ENCODE measurements at regions of chr19 and their contacts with region 1.

Region 1: DNA sequence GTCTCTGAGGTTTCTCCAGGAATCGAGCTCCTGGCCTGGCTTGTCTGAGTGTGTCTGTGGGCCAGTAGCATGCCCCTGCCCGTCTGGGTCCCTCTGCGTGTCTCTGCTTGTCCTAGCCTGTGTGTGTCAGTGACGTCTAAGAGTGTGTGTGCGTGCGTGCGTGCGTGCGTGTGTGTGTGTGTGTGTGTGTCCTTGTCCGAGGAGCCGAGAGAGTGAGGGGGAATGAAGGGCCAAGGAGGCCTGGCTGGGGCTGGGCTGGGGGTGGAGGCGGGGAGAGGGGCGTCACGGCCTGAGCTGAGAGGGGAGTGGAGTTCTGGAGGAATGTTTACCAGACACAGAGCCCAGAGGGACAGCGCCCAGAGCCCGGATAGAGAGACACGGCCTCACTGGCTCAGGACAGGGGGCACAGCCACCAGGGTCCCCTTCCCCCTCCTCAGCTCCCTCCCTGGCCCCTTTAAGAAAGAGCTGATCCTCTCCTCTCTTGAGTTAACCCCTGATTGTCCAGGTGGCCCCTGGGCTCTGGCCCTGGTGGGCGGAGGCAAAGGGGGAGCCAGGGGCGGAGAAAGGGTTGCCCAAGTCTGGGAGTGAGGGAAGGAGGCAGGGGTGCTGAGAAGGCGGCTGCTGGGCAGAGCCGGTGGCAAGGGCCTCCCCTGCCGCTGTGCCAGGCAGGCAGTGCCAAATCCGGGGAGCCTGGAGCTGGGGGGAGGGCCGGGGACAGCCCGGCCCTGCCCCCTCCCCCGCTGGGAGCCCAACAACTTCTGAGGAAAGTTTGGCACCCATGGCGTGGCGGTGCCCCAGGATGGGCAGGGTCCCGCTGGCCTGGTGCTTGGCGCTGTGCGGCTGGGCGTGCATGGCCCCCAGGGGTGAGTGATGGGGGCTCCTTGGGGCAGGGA is at the start of gene AXL:
- DNase-seq: peak; percentile 95
- H3K4me3 ChIP-seq: peak within 1 kb of the TSS; percentile 64 to 86 (median 74)
- H3K27ac ChIP-seq: peak within 1 kb of the TSS; percentile 91 to 98 (median 94)
- H3K4me1 ChIP-seq: peaks cover 0 to 44% (median 40%) of the 10 kb centered on the region in 4 donors
- H3K27me3 ChIP-seq: no peaks in the 10 kb centered on the region
- CTCF ChIP-seq: no peak
- EP300 ChIP-seq: peak in 1 of 4 donors; percentile 69
- POLR2A ChIP-seq: peak; percentile 67 to 70
- total RNA-seq, gene AXL: 85.9 to 108 (median 95.4) TPM

Region 2: DNA sequence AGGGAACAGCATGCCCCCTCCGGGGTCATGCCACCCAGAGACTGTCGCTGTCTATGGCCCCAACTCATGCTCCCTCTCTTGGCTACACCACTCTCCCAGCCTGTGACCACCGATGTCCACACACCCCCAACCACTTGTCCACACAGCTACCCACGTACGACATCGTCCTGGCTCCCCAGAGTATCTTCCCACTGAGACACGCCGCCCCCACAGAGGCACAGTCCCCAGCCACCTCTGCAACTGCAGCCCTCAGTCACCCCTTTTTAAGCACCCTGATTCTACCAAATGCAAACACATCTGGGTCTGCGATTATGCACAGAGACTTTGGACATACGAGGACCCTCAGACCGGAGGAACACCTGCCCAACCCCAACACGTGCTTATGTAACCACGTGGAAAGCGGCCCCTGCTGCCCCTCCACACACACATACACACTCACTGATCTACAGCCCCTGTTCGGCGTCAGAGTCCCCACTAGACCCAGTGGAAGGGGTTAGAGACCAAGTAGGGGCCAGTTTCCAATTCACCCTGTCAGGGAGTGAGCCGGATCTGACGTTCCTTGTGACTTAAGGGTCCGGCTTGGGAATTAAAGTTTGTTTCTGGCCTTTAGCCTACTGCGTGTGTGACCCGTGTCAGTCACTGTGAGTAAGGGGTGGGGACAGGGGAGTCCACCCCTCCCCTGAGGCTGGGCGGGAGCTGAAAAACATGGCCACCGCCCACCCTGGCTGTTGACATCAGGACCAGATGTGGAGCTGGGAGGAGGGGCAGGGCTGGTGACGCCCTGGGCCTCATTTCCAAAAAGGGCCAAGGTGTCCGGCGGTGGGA is 11.7 kb before region 1 on chr19:
- intact Hi-C with region 1: loop called (anchors 1 kb)
- DNase-seq: peak; percentile 90
- H3K4me3 ChIP-seq: peak overlapping the region in 1 of 4 donors; percentile 5
- H3K27ac ChIP-seq: peak overlapping the region; percentile 46 to 59 (median 54)
- H3K4me1 ChIP-seq: peaks cover 0 to 7% (median 0%) of the 10 kb centered on the region in 4 donors
- H3K27me3 ChIP-seq: no peaks in the 10 kb centered on the region
- CTCF ChIP-seq: no peak
- EP300 ChIP-seq: no peak
- POLR2A ChIP-seq: no peak